Cardiac septum (tissue), 1 donor: ENCODE measurements at regions of chr22 and their contacts with region 1.

Region 1: DNA sequence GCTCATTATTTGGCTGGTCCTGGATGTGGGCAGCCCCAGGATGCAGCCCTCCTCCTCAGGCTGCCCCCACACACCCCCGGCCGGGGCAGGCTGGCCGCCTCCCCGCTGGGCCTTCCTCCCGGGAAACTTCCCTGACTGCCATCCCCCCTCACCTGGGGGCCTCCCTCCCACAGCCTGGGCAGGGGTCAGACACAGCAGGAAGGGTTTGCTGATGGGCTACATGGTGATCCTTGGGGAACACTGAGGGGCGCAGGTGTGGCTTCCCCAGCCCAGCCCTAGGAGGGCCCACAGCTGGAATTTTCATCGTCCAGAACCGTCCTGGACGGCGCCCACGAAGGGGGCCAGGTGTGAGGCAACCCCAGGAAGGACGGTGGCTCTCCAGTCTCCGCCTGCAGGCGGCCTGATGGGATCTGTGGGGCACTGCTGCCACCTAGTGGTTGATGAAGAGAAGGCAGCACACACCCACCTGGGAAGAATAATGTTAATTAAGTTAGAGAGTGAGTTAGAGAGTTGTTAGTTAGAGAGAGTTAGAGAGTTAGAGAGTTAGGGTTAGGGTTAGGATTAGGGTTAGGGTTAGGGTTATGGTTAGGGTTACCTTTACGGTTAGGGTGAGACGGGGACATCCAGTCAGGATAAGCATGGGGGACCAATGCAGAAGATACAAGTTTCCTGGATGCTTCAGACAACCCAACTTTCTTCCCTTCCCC is 75.9 kb upstream of the PRR5 start:
- DNase-seq: no peak

Region 2: GRCh38 chr22:43399338-43399979 is 1226.7 kb before region 1 on chr22:
- intact Hi-C with region 1: loop called (anchors 10 kb)
- DNase-seq: no peak

Region 3: GRCh38 chr22:43993027-43993760 is 632.9 kb before region 1 on chr22:
- intact Hi-C with region 1: loop called (anchors 1 kb)
- DNase-seq: no peak

Region 4: DNA sequence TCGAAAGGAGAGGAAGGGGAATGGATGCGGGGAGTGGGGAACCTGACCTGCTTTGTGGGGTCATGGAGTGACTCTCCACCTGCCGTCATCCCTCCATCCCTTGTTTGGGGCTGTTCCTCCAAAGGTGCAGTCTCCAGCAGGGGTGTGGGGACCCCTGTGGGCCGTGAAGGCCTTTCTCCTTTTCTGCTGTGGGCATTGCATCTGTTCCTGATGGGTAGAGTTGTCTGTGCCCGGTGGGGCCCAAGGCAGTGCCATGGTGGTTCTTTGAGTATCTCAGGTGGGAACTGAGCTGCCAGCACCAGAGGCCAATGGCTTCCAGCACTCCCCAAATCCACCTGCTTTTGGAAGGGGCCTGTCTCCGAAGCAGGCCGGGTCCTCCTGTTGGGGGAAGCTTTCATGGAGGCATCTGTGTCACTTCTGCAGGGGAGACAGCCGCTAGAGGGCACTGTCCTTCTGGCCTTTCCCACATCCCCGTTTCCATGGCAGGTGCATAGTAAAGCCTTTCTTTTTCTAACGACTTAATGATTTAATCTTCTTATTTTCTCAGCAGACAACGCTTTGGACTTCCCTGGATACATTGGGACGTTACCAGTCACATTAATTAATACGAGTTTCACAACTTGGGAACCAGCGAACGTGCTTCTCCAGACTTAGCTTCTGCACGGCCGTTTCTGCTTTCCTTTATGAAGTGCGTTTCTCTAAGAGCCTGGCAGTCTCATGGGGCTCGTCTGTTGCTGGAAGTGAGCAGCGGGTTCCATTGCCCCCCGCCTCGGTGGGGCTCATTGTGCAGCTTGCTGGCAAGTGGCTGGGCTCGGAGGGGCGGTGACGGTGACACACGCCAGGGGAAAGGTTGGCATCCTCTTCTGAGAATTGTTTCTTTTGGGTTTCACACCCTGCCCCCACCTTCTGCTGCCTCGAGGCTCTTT is 544.9 kb before region 1 on chr22:
- intact Hi-C with region 1: loop called (anchors 2 kb)
- DNase-seq: peak; percentile 81

Region 5: GRCh38 chr22:44337678-44338004 is 288.5 kb before region 1 on chr22:
- intact Hi-C with region 1: loop called (anchors 10 kb)
- DNase-seq: peak; percentile 81

Region 6: GRCh38 chr22:45019861-45020655 is 393.9 kb after region 1 on chr22:
- intact Hi-C with region 1: no loop called
- DNase-seq: no peak